Heart left ventricle (tissue), 16 donors: ENCODE measurements at regions of chr6 and their contacts with region 1.

Region 1: DNA sequence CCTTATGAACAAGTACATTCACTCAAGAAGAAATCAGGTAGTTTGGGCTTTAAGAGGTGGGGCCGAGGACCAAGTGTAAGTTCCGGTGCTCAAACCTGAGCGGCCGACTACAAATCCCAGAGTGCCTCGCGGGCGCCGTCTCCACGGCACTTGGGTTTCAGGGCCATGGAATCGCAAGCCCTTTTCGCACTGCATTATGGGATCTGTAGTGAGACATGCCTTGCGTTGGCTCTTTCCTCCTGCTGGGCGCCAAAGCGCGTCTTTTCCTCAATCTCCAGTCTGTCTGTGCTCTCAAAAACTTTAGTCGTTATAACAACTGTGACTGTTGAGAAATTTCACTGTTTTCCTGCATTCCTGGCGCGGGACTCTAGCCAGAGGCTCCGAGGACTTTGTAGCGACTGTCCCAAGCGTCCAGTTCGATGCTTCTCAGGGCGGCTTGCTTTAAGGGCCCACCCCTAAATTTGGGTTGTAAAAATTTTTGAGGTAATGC is 433 bp upstream of the FBXO9 start:
- DNase-seq: peak; percentile 97 to 98 (median 97)
- ATAC-seq: peak; percentile 90 to 94 (median 91)
- H3K4me3 ChIP-seq: peak overlapping the region; percentile 66 to 96 (median 87)
- H3K27ac ChIP-seq: peak overlapping the region; percentile 76 to 96 (median 92)
- H3K4me1 ChIP-seq: peaks cover 4 to 59% (median 38%) of the 10 kb centered on the region in 12 donors
- H3K27me3 ChIP-seq: no peaks in the 10 kb centered on the region
- CTCF ChIP-seq: peak in 4 of 12 donors; percentile 6 to 32 (median 13)
- POLR2A ChIP-seq: no peak

Region 2: GRCh38 chr6:52577022-52577777 is 487.6 kb before region 1 on chr6 and contains the start of gene TRAM2:
- intact Hi-C with region 1: loop called in 1 of 10 experiments (anchors 5 kb)
- DNase-seq: peak; percentile 87 to 95 (median 91)
- ATAC-seq: peak; percentile 63 to 91 (median 78)
- H3K4me3 ChIP-seq: peak within 1 kb of the TSS; percentile 50 to 98 (median 91)
- H3K27ac ChIP-seq: peak within 1 kb of the TSS; percentile 91 to 100 (median 99)
- H3K4me1 ChIP-seq: peaks cover 9 to 52% (median 44%) of the 10 kb centered on the region in 12 donors
- H3K27me3 ChIP-seq: no peaks in the 10 kb centered on the region
- CTCF ChIP-seq: peak in 5 of 12 donors; percentile 18 to 34 (median 27)
- POLR2A ChIP-seq: peak in 1 of 2 donors; percentile 41
- total RNA-seq, gene TRAM2: 9.8 to 19.0 (median 12.1) TPM

Region 3: DNA sequence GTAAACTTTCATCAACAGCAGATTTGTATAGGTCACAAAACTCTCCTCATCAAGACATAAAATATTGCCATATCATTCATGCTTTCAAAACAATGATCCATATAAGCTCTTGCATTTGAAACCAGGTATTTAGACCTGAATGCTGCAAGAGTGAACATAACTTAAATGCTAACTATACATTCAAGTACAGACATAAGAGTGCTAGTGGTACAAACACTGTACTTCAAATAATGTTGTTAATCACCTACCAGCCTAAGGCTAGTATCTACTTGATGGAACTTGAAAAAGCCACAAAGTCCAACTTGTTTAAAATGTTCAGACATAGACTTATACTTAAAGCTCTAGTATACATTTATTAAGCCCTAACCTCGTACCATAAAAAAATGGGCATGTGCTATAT is 285.5 kb before region 1 on chr6:
- intact Hi-C with region 1: no loop called
- DNase-seq: no peak
- ATAC-seq: no peak
- H3K4me3 ChIP-seq: no peak overlapping the region
- H3K27ac ChIP-seq: no peak overlapping the region
- H3K4me1 ChIP-seq: no peaks in the 10 kb centered on the region
- H3K27me3 ChIP-seq: peaks cover 0 to 2% (median 0%) of the 10 kb centered on the region in 9 donors
- CTCF ChIP-seq: no peak
- POLR2A ChIP-seq: no peak

Region 4: DNA sequence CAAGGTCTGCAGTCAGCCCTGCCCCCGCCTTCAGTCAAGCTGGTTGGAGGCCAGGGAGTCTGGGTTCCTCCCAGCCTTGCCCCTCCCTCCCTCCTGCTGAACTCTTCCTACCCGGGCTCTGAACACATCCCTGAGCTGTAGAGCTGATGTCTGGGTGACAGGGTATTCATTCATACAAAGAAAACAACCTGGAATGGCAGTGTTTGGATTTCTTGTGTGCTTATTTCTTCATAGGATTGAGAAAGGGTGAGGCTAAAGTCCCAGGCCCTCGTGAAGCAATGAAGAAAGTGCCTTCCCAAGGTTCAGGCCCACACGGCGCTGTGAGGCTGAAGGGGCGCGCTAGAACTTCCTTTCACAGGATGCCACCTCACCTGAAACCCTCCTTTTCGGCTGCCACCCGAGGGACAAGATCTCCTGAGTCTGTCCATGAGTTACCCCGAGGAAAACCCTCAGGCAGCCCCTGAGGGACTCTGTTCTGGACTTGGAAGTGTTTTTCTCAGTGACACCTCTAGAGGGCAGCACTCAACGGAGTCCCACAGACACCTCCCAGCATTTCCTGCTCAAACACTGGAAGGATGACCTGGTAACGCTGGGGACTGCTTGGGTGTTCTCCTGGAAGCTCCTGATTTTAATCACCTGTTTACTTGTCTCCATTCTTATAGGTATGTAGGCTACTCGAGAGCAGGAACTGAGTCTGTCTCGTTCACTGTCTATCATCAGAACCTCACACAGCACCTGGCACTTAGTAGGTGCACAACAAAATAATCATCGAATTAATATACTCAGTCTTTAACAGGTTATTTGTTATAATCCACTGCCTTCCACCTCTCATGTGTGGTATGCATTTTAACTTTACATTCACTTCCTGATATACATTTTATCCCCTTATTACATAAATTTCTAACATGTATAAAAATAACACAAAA is 249.3 kb before region 1 on chr6:
- intact Hi-C with region 1: loop called in 1 of 10 experiments (anchors 10 kb)
- DNase-seq: peak in 1 of 5 donors; percentile 23
- ATAC-seq: peak in 3 of 4 donors; percentile 71 to 76 (median 75)
- H3K4me3 ChIP-seq: no peak overlapping the region
- H3K27ac ChIP-seq: no peak overlapping the region
- H3K4me1 ChIP-seq: no peaks in the 10 kb centered on the region
- H3K27me3 ChIP-seq: no peaks in the 10 kb centered on the region
- CTCF ChIP-seq: peak; percentile 37 to 70 (median 56)
- POLR2A ChIP-seq: no peak

Region 5: DNA sequence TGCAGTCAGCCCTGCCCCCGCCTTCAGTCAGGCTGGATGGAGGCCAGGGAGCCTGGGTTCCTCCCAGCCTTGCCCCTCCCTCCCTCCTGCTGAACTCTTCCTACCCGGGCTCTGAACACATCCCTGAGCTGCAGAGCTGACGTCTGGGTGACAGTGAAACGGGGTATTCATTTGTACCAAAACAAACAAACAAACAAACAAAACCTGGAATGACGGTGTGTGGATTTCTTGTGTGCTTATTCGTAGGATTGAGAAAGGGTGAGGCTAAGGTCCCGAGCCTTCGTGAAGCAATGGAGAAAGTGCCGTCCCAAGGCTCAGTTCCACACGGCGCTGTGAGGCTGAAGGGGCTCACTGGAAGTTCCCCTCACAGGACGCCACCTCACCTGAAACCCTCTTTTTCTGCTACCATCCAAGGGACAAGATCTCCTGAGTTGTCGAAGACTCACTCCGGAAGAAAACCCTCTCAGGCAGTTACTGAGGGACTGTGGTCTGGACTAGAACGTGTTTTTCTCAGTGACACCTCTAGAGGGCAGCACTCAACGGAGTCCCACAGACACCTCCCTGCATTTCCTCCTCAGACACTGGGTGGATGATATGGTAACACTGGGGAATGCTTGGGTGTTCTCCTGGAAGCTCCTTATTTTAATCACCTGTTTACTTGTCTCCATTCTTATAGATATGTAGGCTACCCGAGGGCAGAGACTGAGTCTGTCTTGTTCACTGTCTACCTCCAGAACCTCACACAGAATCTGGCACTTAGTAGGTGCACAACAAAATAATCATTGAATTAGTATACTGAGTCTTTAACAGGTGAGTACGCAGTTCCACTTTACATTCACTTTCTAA is 182.6 kb before region 1 on chr6:
- intact Hi-C with region 1: loop called in 1 of 10 experiments (anchors 5 kb)
- DNase-seq: peak; percentile 41 to 63 (median 53)
- ATAC-seq: peak; percentile 86 to 98 (median 97)
- H3K4me3 ChIP-seq: peak overlapping the region; percentile 17 to 62 (median 54)
- H3K27ac ChIP-seq: peak overlapping the region in 1 of 12 donors; percentile 15
- H3K4me1 ChIP-seq: peaks cover 0 to 5% (median 0%) of the 10 kb centered on the region in 12 donors
- H3K27me3 ChIP-seq: no peaks in the 10 kb centered on the region
- CTCF ChIP-seq: peak; percentile 71 to 88 (median 80)
- POLR2A ChIP-seq: no peak

Region 6: GRCh38 chr6:52995913-52996645 is 68.7 kb before region 1 on chr6:
- intact Hi-C with region 1: loop called in 1 of 10 experiments (anchors 2 kb)
- DNase-seq: peak in 4 of 5 donors; percentile 44 to 51 (median 45)
- ATAC-seq: peak in 2 of 4 donors; percentile 4 to 7
- H3K4me3 ChIP-seq: peak overlapping the region in 10 of 12 donors; percentile 26 to 80 (median 58)
- H3K27ac ChIP-seq: peak overlapping the region in 11 of 12 donors; percentile 58 to 98 (median 91)
- H3K4me1 ChIP-seq: peaks cover 0 to 25% (median 15%) of the 10 kb centered on the region in 12 donors
- H3K27me3 ChIP-seq: no peaks in the 10 kb centered on the region
- CTCF ChIP-seq: no peak
- POLR2A ChIP-seq: no peak

Region 7: GRCh38 chr6:53134601-53135235 is 69.9 kb after region 1 on chr6:
- intact Hi-C with region 1: no loop called
- DNase-seq: no peak
- ATAC-seq: no peak
- H3K4me3 ChIP-seq: no peak overlapping the region
- H3K27ac ChIP-seq: no peak overlapping the region
- H3K4me1 ChIP-seq: no peaks in the 10 kb centered on the region
- H3K27me3 ChIP-seq: peaks cover 0 to 4% (median 0%) of the 10 kb centered on the region in 9 donors
- CTCF ChIP-seq: no peak
- POLR2A ChIP-seq: no peak